Activated CD8-positive, alpha-beta memory T cell treated with anti-CD3 and anti-CD28 coated beads, Interleukin-2, amount 10 ng/mL, durations not matched to agents 7 days and 5 days (primary cell): ENCODE measurements at regions of chr4 and their contacts with region 1.

Region 1: DNA sequence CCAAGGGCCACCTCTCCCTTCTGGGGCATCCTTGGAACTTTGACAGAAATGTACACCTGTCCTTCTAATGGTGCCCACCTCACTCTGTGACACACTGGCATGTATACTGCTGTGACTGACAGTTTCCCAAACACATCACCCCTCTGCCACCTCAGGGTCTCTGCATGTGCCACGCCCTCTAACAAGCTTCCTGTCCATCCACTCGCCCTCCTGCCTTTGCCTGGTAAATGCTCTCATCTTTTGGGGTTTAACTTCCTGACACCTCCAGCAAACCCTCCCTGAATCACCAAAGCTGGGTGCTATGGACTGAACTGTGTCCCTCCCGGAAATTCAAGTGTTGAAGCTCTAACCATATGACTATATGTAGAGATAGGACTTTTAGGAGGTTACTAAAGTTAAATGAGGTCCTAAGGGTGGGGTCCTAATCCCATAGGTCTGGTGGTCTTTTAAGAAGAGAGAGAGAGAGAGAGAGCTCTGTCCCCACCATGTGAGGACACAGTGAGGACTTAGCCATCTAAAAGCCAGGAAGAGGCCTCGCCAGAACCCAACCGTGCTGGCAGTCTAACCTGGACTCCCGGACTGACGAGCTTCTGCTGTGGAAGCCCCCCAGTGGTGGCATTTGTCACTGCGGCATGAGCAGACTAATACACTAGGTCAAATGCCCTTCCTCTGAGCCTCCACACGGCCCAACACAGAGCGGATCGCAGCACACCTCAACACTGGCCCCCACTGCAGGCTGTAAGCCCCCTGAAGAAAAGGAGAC is 95.6 kb downstream of the AFAP1 start:
- DNase-seq: peak; percentile 80
- ATAC-seq: peak; percentile 93
- H3K4me3 Mint-ChIP-seq: no peak overlapping the region
- H3K27ac Mint-ChIP-seq: no peak overlapping the region
- H3K4me1 Mint-ChIP-seq: peaks cover 14% of the 10 kb centered on the region
- H3K27me3 Mint-ChIP-seq: no peaks in the 10 kb centered on the region

Region 2: GRCh38 chr4:7827991-7828720 is 15.9 kb before region 1 on chr4:
- CTCF ChIA-PET with region 1: interaction called, 13 read pairs
- DNase-seq: peak; percentile 88
- ATAC-seq: peak; percentile 80
- H3K4me3 Mint-ChIP-seq: peak overlapping the region; percentile 59
- H3K27ac Mint-ChIP-seq: peak overlapping the region; percentile 90
- H3K4me1 Mint-ChIP-seq: peaks cover 48% of the 10 kb centered on the region
- H3K27me3 Mint-ChIP-seq: no peaks in the 10 kb centered on the region

Region 3: GRCh38 chr4:7857238-7857701 is 13.3 kb after region 1 on chr4:
- CTCF ChIA-PET with region 1: interaction called, 23 read pairs
- DNase-seq: no peak
- ATAC-seq: peak; percentile 38
- H3K4me3 Mint-ChIP-seq: no peak overlapping the region
- H3K27ac Mint-ChIP-seq: no peak overlapping the region
- H3K4me1 Mint-ChIP-seq: peaks cover 51% of the 10 kb centered on the region
- H3K27me3 Mint-ChIP-seq: peaks cover 11% of the 10 kb centered on the region

Region 4: GRCh38 chr4:7863911-7864681 is 20.1 kb after region 1 on chr4:
- CTCF ChIA-PET with region 1: interaction called, 10 read pairs
- DNase-seq: peak; percentile 55
- ATAC-seq: peak; percentile 56
- H3K4me3 Mint-ChIP-seq: no peak overlapping the region
- H3K27ac Mint-ChIP-seq: peak overlapping the region; percentile 8
- H3K4me1 Mint-ChIP-seq: peaks cover 25% of the 10 kb centered on the region
- H3K27me3 Mint-ChIP-seq: no peaks in the 10 kb centered on the region

Region 5: DNA sequence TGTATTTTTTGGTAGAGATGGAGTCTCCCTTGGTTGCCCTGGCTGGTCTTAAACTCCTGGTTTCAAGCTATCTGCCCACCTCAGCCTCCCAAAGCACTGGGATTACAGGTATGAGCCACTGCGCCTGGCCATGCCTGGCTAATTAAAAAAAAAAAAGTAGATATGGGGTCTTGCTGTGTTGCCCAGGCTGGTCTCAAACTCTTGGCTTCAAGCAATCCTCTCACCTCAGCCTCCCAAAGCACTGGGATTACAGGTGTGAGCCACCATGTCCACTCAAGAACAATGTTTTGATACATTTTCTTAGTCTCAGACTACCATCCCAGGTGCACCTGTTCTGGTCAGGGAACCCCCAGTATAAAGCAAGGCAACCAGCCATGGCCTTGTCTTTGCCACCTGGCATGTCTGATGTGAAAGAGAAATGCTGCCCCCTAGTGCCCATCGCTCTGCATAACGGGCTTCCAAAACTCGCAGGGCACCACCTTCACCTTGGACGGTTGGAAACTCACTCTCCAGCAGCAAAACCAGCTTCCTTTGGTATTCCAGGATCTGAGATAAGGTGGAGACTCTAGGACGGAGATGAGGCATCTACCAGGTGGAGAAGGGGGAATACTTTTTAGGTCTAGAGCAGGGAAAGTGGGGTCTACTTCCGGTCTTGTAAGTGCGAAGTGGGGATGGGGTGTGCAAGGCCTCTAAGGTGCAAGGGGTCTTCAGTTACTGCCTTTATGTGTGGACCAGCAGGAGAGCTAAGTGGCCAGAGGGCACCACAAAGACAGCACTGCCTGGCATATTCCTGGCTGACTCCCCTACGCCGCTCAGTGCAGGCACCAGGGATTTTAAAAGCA is 143.4 kb after region 1 on chr4:
- CTCF ChIA-PET with region 1: interaction called, 12 read pairs
- DNase-seq: peak; percentile 81
- ATAC-seq: peak; percentile 86
- H3K4me3 Mint-ChIP-seq: no peak overlapping the region
- H3K27ac Mint-ChIP-seq: no peak overlapping the region
- H3K4me1 Mint-ChIP-seq: peaks cover 9% of the 10 kb centered on the region
- H3K27me3 Mint-ChIP-seq: no peaks in the 10 kb centered on the region